Activated B cell treated with CpG ODN at 0.5 μM for 24 hours (primary cell): ENCODE measurements at regions of chr1 and their contacts with region 1.

Region 1: GRCh38 chr1:53367503-53368304 is 39.8 kb upstream of the LRP8 start:
- DNase-seq: peak; percentile 24
- ATAC-seq: peak; percentile 91
- H3K4me3 Mint-ChIP-seq: peak overlapping the region; percentile 91
- H3K27ac Mint-ChIP-seq: peak overlapping the region; percentile 95
- H3K4me1 Mint-ChIP-seq: peaks cover 47% of the 10 kb centered on the region
- H3K27me3 Mint-ChIP-seq: no peaks in the 10 kb centered on the region
- CTCF ChIP-seq: no peak

Region 2: GRCh38 chr1:53278201-53278725 is 89.4 kb before region 1 on chr1:
- CTCF ChIA-PET with region 1: interaction called, 11 read pairs
- POLR2A ChIA-PET with region 1: interaction called, 9 read pairs
- intact Hi-C with region 1: no loop called
- DNase-seq: peak; percentile 64
- ATAC-seq: peak; percentile 87
- H3K4me3 Mint-ChIP-seq: no peak overlapping the region
- H3K27ac Mint-ChIP-seq: no peak overlapping the region
- H3K4me1 Mint-ChIP-seq: no peaks in the 10 kb centered on the region
- H3K27me3 Mint-ChIP-seq: no peaks in the 10 kb centered on the region
- CTCF ChIP-seq: peak; percentile 73

Region 3: DNA sequence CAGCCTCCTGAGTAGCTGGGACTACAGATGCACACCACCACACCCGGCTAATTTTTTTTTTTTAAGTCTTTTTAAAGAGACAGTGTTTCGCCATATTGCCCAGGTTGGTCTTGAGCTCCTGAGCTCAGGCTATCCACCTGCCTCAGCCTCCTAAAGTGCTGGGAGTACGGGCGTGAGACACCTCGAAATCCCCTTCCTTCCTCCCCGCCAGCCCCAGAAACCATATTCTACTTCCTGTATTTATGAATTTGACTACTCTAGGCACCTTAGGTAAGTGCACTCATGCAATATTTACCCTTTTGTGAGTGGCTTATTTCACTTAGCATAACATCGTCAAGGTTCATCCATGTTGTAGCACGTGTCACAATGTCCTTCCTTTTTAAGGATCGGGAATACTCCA is 32.9 kb before region 1 on chr1:
- CTCF ChIA-PET with region 1: no interaction called
- POLR2A ChIA-PET with region 1: interaction called, 12 read pairs
- intact Hi-C with region 1: no loop called
- DNase-seq: peak; percentile 16
- ATAC-seq: peak; percentile 84
- H3K4me3 Mint-ChIP-seq: peak overlapping the region; percentile 64
- H3K27ac Mint-ChIP-seq: peak overlapping the region; percentile 66
- H3K4me1 Mint-ChIP-seq: peaks cover 10% of the 10 kb centered on the region
- H3K27me3 Mint-ChIP-seq: no peaks in the 10 kb centered on the region
- CTCF ChIP-seq: no peak

Region 4: DNA sequence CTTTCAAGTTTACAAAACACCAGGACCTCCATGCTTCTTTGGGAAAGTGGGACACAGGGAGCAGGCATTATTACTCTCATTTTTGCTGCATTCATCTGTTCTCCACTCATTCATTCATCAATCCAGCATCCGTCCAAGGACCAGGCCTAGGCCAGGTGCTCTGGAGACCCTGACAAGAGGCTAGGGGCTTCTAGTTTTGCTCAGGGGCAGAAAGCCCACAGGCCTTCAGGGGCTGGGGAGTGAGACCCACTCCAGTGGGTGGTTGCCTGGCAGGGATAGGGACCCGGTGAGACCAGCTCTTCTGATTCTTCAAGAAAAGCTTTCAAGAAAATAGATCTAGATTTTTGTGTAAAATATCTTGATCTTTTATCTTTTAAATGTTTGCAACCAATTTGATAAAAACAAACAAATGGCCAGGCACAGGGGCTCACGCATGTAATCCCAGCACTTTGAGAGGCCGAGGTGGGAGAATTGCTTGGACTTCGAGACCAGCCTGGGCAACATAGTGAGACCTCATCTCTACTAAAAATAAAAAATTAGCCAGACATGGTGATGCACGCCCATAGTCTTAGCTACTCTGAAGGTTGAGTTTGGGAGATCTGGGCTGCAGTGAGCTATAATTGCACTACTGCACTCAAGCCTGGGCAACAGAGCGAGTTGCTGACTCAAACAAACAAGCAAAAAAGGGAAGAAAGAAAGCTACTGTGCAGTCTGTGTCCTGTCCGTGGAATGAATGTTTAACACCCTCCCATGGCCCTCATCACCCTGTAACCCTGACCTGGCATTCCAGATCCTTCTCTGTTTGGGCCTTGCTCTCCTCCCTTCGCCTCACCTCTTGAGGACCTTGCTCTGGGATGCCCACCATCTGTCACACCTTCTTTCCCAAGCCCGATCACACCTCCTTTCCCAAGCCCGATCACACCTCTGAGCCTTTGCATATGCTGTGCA is 22.5 kb before region 1 on chr1:
- CTCF ChIA-PET with region 1: no interaction called
- POLR2A ChIA-PET with region 1: interaction called, 4 read pairs
- intact Hi-C with region 1: loop called (anchors 1 kb)
- DNase-seq: peak; percentile 11
- ATAC-seq: peak; percentile 92
- H3K4me3 Mint-ChIP-seq: no peak overlapping the region
- H3K27ac Mint-ChIP-seq: peak overlapping the region; percentile 15
- H3K4me1 Mint-ChIP-seq: peaks cover 10% of the 10 kb centered on the region
- H3K27me3 Mint-ChIP-seq: no peaks in the 10 kb centered on the region
- CTCF ChIP-seq: no peak

Region 5: GRCh38 chr1:53393325-53393792 is 25.7 kb after region 1 on chr1:
- CTCF ChIA-PET with region 1: interaction called, 18 read pairs
- POLR2A ChIA-PET with region 1: no interaction called
- intact Hi-C with region 1: loop called (anchors 2 kb)
- DNase-seq: peak; percentile 73
- ATAC-seq: peak; percentile 80
- H3K4me3 Mint-ChIP-seq: no peak overlapping the region
- H3K27ac Mint-ChIP-seq: no peak overlapping the region
- H3K4me1 Mint-ChIP-seq: peaks cover 13% of the 10 kb centered on the region
- H3K27me3 Mint-ChIP-seq: peaks cover 2% of the 10 kb centered on the region
- CTCF ChIP-seq: peak; percentile 43

Region 6: DNA sequence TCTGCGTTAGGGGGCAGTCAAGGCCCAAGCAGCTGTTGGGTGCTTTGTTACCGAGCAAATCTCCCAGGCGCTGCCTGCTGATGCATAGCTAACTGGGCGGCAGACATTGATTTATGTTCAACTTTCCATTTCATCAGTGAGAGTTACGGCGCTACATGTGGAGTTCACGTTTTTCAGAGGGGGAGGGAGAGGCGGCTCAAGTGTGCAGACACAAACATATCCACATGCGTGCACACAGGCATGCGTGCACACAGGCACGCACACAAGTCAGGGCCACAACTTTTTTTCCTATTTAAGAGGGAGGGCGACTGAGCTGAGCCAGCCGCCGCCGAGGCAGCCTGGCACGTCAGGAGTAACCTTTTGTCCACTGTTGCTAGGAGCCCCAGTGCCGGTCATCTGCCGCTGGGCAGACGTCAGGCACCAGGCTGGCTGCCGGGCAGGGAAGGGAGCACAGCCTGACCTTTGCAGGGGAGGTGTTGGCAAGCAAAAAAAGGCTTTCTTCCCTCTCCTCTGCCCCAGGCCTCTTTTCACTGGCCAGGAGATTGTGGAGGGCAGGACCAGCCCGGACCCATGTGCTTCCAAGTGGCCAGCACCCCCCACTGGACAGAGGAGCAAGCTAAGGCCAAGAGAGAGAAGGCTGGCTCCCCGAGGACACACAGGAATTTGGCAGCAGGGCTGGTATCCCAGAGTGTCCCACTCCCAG is 905.5 kb after region 1 on chr1:
- CTCF ChIA-PET with region 1: no interaction called
- POLR2A ChIA-PET with region 1: no interaction called
- intact Hi-C with region 1: no loop called
- DNase-seq: no peak
- ATAC-seq: peak; percentile 62
- H3K4me3 Mint-ChIP-seq: no peak overlapping the region
- H3K27ac Mint-ChIP-seq: no peak overlapping the region
- H3K4me1 Mint-ChIP-seq: peaks cover 2% of the 10 kb centered on the region
- H3K27me3 Mint-ChIP-seq: no peaks in the 10 kb centered on the region
- CTCF ChIP-seq: no peak